Activated naive CD8-positive, alpha-beta T cell treated with anti-CD3 and anti-CD28 coated beads, Interleukin-2, amount 10 ng/mL, durations not matched to agents 7 days and 5 days (primary cell): ENCODE measurements at regions of chr6 and their contacts with region 1.

Region 1: GRCh38 chr6:72616406-72617015 is 5.4 kb upstream of the KCNQ5 start:
- DNase-seq: no peak
- ATAC-seq: no peak
- H3K4me3 Mint-ChIP-seq: no peak overlapping the region
- H3K27ac Mint-ChIP-seq: no peak overlapping the region
- H3K4me1 Mint-ChIP-seq: peaks cover 20% of the 10 kb centered on the region
- H3K27me3 Mint-ChIP-seq: no peaks in the 10 kb centered on the region

Region 2: DNA sequence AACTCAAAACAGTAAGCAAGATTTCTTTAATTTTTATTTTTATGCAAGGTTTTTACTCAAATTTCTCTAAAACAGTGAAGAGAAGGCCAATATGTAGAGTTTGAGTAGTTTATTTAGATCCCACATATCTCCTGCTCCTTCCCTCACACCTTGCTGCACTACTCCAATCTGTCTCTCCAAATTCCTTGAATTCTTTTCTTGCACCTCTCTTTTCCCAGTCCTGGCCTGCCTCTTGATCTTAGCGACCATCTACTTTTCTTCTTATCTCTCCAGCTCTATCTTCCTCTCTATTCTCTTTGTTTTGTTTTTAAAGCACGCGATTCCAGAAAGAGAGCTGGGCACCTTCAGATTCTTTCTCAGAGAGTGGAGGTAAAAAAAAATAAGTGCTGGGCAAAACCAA is 81.4 kb before region 1 on chr6:
- POLR2A ChIA-PET with region 1: no interaction called
- DNase-seq: no peak
- ATAC-seq: no peak
- H3K4me3 Mint-ChIP-seq: no peak overlapping the region
- H3K27ac Mint-ChIP-seq: no peak overlapping the region
- H3K4me1 Mint-ChIP-seq: peaks cover 5% of the 10 kb centered on the region
- H3K27me3 Mint-ChIP-seq: peaks cover 4% of the 10 kb centered on the region

Region 3: DNA sequence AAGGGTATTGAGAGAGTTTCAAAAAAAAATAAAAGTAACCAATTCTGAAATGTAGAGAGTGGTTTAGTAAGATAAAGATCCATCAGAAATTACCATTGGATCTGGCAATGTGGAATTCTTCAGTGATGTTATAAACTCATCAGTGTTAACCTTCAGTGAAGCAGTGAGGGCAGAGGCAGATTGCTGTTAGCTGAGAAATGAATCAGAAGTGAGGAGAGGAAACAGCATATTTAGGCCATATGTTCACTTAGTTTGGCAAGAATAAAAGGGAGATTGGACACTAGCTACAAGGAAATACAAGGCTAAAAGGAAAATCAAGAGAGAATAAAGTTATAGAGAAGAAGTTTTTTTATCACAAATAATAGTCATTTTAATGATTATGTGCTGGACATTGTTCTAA is 15.0 kb after region 1 on chr6:
- POLR2A ChIA-PET with region 1: no interaction called
- DNase-seq: no peak
- ATAC-seq: no peak
- H3K4me3 Mint-ChIP-seq: no peak overlapping the region
- H3K27ac Mint-ChIP-seq: no peak overlapping the region
- H3K4me1 Mint-ChIP-seq: peaks cover 4% of the 10 kb centered on the region
- H3K27me3 Mint-ChIP-seq: no peaks in the 10 kb centered on the region

Region 4: DNA sequence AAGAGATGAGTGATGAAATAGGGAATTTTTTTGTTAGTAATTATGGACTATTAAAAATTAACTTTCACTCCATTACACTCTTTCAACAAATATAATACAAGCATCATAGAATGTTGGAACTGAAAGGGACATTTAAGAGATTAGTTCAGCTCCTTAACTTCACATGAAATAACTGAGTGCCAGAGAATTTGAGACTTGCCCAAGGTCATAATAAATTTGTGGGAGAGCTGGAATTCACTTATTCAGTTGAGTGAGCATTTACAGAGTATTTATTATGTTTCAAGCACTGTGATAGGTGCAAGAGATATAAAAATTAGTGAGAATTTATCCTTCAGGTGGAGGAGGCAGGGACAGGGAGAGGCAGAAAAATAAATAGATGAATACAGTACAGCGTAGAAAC is 159.9 kb after region 1 on chr6:
- POLR2A ChIA-PET with region 1: no interaction called
- DNase-seq: no peak
- ATAC-seq: no peak
- H3K4me3 Mint-ChIP-seq: no peak overlapping the region
- H3K27ac Mint-ChIP-seq: no peak overlapping the region
- H3K4me1 Mint-ChIP-seq: no peaks in the 10 kb centered on the region
- H3K27me3 Mint-ChIP-seq: no peaks in the 10 kb centered on the region

Region 5: DNA sequence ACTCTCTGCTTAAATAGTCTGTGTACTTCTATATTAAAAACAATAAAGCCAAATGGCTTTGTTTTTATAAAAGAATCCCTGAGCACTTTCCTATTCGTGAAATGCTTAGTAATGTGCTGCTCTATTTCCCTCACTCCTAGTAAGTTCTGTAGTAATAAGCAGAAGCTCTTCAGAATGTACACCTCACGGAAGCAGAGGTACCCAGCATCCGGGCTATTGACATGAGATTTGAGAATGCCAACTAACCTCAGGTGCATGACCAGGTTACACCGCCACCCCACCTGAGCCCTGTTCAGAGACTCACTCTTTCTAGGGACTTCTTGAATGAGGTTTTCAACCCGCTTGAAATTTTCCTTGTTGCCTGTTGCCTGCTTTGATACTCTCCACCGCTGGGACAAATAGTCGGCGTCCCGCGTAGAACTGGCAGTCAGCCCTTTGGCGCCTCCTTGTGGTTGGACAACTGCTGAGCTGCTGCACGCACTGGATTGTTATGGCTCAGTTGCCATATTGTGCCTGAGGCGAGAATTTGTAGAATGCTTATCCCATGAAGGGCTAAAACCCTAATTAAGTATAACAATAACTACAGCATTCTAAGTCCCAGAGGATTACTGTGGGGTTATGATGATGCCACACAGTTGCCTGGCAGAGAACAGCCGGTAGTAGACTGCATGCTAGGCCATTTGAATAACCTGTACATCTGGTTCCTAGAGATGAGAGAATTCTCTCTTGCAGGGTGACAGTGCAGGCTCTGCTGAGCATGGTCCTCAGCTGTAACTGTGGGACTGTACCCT is 513.3 kb after region 1 on chr6:
- POLR2A ChIA-PET with region 1: interaction called, 12 read pairs
- DNase-seq: peak; percentile 82
- ATAC-seq: peak; percentile 92
- H3K4me3 Mint-ChIP-seq: peak overlapping the region; percentile 50
- H3K27ac Mint-ChIP-seq: no peak overlapping the region
- H3K4me1 Mint-ChIP-seq: peaks cover 2% of the 10 kb centered on the region
- H3K27me3 Mint-ChIP-seq: no peaks in the 10 kb centered on the region